CD8-positive, alpha-beta T cell (primary cell): ENCODE measurements at regions of chr5 and their contacts with region 1.

Region 1: DNA sequence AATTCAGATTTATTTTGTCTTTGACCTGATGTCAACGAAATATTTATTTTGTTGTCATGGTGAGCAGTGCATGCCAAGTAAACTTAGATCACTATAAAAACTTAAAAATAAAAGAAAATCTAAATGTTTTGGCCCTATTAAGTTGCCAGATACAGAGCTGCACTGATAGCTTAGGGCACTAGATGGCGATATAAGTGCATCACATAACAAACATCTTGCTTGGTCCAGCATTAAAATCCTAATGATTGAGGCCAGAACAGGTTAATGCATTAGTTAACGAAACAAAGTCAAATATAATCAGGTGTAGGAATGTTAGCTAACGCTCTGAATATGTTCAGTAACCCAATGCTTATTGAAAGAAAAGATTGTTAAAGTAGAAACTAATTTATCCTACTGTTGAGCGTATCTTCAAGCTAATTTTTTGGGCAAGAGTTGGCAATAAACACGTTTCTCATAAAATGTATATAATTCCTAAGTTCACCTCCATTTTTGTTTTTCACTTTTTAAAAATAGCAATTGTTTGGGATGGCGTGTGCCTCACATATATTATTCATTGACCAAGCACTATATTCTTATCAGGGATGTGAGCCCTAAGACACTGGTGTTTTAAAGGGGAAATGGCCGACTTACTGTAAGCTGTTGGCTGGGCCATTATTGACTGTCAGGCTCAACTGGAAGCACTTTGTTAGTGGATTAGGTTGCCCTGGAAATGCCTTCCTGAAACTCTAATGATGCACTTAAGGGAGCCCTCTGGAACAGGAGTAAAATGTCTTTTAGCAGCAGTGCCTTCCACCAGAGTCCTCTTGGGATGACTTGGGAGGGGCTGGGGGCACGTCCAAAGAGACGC is 33.3 kb downstream of the KCTD16 start:
- DNase-seq: peak in 5 of 9 experiments; percentile 24 to 71 (median 28)
- ATAC-seq: peak; percentile 61
- H3K4me3 ChIP-seq: no peak overlapping the region
- H3K4me3 Mint-ChIP-seq: no peak overlapping the region
- H3K27ac ChIP-seq: no peak overlapping the region
- H3K27ac Mint-ChIP-seq: no peak overlapping the region
- H3K4me1 ChIP-seq: no peaks in the 10 kb centered on the region
- H3K4me1 Mint-ChIP-seq: peaks cover 5% of the 10 kb centered on the region
- H3K27me3 ChIP-seq: peaks cover 0 to 7% of the 10 kb centered on the region in 2 experiments
- H3K27me3 Mint-ChIP-seq: peaks cover 62% of the 10 kb centered on the region
- CTCF ChIP-seq: peak; percentile 95

Region 2: DNA sequence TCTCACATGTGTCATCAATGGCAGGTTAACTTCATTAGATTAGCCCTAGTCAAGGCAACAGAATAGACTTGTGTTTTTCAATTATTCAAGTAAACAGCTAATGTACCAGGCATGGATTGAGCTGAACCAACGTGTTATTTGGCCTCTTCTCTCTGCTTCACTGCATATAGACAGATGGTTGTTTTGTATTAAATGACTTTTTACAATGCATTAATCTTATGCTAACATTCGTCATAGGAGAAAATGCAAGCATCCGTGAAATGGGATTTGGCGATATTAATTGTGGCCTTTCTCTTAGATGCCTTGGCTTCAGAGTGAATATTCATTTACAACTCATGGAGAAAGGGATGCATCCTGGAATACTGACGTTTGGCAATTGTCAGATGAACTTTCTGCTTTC is 174.7 kb after region 1 on chr5:
- CTCF ChIA-PET with region 1: no interaction called
- POLR2A ChIA-PET with region 1: no interaction called
- intact Hi-C with region 1: no loop called
- DNase-seq: no peak
- ATAC-seq: no peak
- H3K4me3 ChIP-seq: no peak overlapping the region
- H3K4me3 Mint-ChIP-seq: no peak overlapping the region
- H3K27ac ChIP-seq: no peak overlapping the region
- H3K27ac Mint-ChIP-seq: no peak overlapping the region
- H3K4me1 ChIP-seq: no peaks in the 10 kb centered on the region
- H3K4me1 Mint-ChIP-seq: no peaks in the 10 kb centered on the region
- H3K27me3 ChIP-seq: no peaks in the 10 kb centered on the region
- H3K27me3 Mint-ChIP-seq: no peaks in the 10 kb centered on the region
- CTCF ChIP-seq: no peak

Region 3: DNA sequence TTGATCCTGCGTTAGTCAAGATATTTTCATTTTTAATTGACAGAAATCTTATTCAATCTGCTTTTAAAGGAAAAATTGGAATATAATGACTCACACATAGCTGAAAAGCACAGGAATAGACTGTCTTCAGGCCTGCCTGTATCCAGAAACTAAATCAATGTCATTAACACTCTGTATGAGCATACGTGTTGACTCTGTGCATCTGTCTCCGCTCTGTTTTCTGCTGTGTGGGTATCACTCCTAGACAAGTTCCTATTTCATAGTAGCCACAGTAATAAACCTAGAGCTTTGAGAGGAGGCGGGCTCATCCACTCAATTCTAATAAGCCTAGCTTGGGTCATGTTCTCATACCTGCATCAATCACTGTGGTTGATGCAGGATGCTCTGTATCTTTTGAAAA is 234.3 kb after region 1 on chr5:
- CTCF ChIA-PET with region 1: no interaction called
- POLR2A ChIA-PET with region 1: no interaction called
- intact Hi-C with region 1: no loop called
- DNase-seq: no peak
- ATAC-seq: no peak
- H3K4me3 ChIP-seq: no peak overlapping the region
- H3K4me3 Mint-ChIP-seq: no peak overlapping the region
- H3K27ac ChIP-seq: no peak overlapping the region
- H3K27ac Mint-ChIP-seq: no peak overlapping the region
- H3K4me1 ChIP-seq: no peaks in the 10 kb centered on the region
- H3K4me1 Mint-ChIP-seq: no peaks in the 10 kb centered on the region
- H3K27me3 ChIP-seq: no peaks in the 10 kb centered on the region
- H3K27me3 Mint-ChIP-seq: no peaks in the 10 kb centered on the region
- CTCF ChIP-seq: no peak

Region 4: DNA sequence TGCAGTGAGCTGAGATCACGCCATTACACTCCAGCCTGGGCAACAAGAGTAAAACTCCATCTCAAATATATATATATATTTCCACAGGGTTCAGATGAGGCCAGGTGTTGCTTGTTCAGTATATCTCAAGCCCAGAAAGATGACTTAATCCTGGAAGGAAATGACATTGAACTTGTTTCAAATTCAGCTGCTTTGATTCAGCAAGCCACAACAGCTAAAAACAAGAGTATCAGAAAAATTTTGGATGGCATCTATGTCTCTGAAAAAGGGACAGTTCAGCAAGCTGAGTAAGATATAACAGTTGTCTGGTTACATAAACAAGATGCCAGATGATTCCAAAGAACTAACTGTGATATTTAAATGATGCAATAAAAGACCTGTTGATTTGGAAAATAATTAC is 318.7 kb after region 1 on chr5:
- CTCF ChIA-PET with region 1: no interaction called
- POLR2A ChIA-PET with region 1: no interaction called
- intact Hi-C with region 1: no loop called
- DNase-seq: no peak
- ATAC-seq: no peak
- H3K4me3 ChIP-seq: no peak overlapping the region
- H3K4me3 Mint-ChIP-seq: no peak overlapping the region
- H3K27ac ChIP-seq: no peak overlapping the region
- H3K27ac Mint-ChIP-seq: no peak overlapping the region
- H3K4me1 ChIP-seq: no peaks in the 10 kb centered on the region
- H3K4me1 Mint-ChIP-seq: no peaks in the 10 kb centered on the region
- H3K27me3 ChIP-seq: no peaks in the 10 kb centered on the region
- H3K27me3 Mint-ChIP-seq: no peaks in the 10 kb centered on the region
- CTCF ChIP-seq: no peak

Region 5: DNA sequence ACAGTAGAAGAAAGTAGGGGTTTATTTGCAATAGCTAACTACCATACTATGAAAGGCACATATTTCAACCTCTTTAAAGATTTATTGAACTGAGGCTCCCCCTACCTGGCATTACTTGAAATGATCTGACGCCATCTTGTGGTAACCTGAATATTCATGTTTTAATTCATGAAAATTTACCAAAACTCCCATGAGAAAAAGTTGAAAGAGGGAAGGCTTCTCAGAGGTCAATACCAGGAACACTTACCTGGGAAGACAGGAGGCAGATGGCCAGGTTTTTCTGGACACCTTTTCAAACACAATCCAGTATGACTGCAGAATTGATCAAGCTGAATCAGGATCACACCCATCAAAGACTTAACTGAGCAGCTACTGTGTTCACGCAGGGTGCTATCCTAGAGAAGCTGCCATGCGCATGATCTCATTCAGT is 1621.8 kb after region 1 on chr5:
- CTCF ChIA-PET with region 1: interaction called, 7 read pairs
- POLR2A ChIA-PET with region 1: no interaction called
- intact Hi-C with region 1: loop called in 1 of 2 experiments (anchors 2 kb)
- DNase-seq: peak in 2 of 9 experiments; percentile 33 to 48
- ATAC-seq: no peak
- H3K4me3 ChIP-seq: no peak overlapping the region
- H3K4me3 Mint-ChIP-seq: no peak overlapping the region
- H3K27ac ChIP-seq: no peak overlapping the region
- H3K27ac Mint-ChIP-seq: no peak overlapping the region
- H3K4me1 ChIP-seq: no peaks in the 10 kb centered on the region
- H3K4me1 Mint-ChIP-seq: no peaks in the 10 kb centered on the region
- H3K27me3 ChIP-seq: no peaks in the 10 kb centered on the region
- H3K27me3 Mint-ChIP-seq: no peaks in the 10 kb centered on the region
- CTCF ChIP-seq: peak; percentile 40

Region 6: DNA sequence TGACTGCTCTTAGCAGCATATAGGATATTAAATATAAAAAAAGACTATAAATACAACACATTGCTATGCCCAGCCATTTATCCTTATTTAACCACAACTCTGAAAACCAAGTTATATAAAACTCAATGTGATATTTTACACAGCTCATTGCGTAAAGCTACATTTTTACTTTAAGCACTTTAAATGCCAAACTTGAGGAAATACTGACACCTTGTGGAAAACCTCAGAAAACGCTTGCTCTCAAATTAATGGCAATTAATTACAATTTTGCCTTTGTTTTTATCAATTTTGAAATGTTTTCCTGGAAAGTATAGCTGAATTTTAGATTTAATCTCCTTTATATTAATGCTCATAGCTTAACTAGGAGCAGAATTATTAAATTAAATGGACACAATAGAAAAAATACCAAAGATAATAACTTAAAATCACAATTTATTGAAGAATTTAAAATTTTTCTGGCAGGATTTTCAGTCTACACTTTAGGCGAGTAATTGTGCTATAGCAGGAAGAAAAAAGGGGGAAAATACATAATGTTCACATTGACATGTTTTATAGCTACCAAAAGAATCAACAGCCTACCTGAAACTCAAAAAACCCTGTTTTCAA is 1926.6 kb after region 1 on chr5:
- CTCF ChIA-PET with region 1: no interaction called
- POLR2A ChIA-PET with region 1: no interaction called
- intact Hi-C with region 1: loop called in 1 of 2 experiments (anchors 2 kb)
- DNase-seq: peak in 2 of 9 experiments; percentile 16 to 28
- ATAC-seq: no peak
- H3K4me3 ChIP-seq: no peak overlapping the region
- H3K4me3 Mint-ChIP-seq: no peak overlapping the region
- H3K27ac ChIP-seq: no peak overlapping the region
- H3K27ac Mint-ChIP-seq: no peak overlapping the region
- H3K4me1 ChIP-seq: no peaks in the 10 kb centered on the region
- H3K4me1 Mint-ChIP-seq: no peaks in the 10 kb centered on the region
- H3K27me3 ChIP-seq: no peaks in the 10 kb centered on the region
- H3K27me3 Mint-ChIP-seq: no peaks in the 10 kb centered on the region
- CTCF ChIP-seq: peak; percentile 46